Natural killer cell (primary cell): ENCODE measurements at regions of chr1 and their contacts with region 1.

Region 1: GRCh38 chr1:10472220-10473144 is at the start of gene DFFA:
- DNase-seq: peak; percentile 85 to 95
- ATAC-seq: peak; percentile 78 to 91 (median 90)
- H3K4me3 ChIP-seq: peak within 1 kb of the TSS; percentile 82
- H3K4me3 Mint-ChIP-seq: peak within 1 kb of the TSS; percentile 96
- H3K27ac ChIP-seq: peak within 1 kb of the TSS; percentile 36
- H3K27ac Mint-ChIP-seq: peak within 1 kb of the TSS; percentile 86 to 93
- H3K4me1 ChIP-seq: peaks cover 36% of the 10 kb centered on the region
- H3K4me1 Mint-ChIP-seq: peaks cover 41 to 54% of the 10 kb centered on the region in 2 donors
- H3K27me3 ChIP-seq: no peaks in the 10 kb centered on the region
- H3K27me3 Mint-ChIP-seq: no peaks in the 10 kb centered on the region
- CTCF ChIP-seq: no peak
- total RNA-seq, gene DFFA: 17.5 to 21.8 (median 21.5) TPM

Region 2: DNA sequence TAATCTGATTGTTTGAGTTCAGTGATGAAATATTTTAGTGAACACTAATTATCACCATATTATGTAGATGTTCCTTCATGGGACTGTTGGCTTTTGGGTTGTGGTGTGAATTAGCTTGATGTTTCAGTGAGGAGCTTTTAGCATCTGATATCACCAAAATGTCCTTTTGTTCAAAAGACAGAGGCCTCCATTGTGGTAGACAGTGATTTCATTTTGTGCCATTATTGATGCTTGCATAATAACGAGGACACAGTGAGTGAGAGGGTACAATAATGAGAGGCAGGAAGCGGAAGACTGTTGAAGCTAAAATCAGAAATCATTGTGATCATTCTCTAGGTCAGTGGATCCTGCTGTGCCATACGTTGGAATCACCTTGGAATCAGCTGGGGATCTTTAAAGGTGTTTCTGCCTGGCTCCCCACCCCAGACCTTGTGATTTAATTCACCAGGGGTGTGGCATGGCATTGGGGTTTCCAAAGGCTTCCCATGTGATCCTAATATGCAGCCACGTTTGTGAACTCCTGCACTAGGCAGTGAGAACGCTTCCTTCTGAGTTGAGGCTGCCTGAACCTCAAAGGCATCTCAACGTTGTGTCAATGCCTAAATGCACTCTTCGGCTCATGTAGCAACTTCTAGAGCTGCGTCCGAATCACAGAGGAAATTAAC is 344.2 kb before region 1 on chr1:
- intact Hi-C with region 1: no loop called
- DNase-seq: no peak
- ATAC-seq: no peak
- H3K4me3 ChIP-seq: no peak overlapping the region
- H3K4me3 Mint-ChIP-seq: no peak overlapping the region
- H3K27ac ChIP-seq: no peak overlapping the region
- H3K27ac Mint-ChIP-seq: no peak overlapping the region
- H3K4me1 ChIP-seq: no peaks in the 10 kb centered on the region
- H3K4me1 Mint-ChIP-seq: no peaks in the 10 kb centered on the region
- H3K27me3 ChIP-seq: no peaks in the 10 kb centered on the region
- H3K27me3 Mint-ChIP-seq: no peaks in the 10 kb centered on the region
- CTCF ChIP-seq: no peak

Region 3: GRCh38 chr1:10398734-10399623 is 73.5 kb before region 1 on chr1 and contains the start of gene PGD:
- intact Hi-C with region 1: loop called (anchors 2 kb)
- DNase-seq: peak; percentile 96 to 97
- ATAC-seq: peak; percentile 95 to 99 (median 95)
- H3K4me3 ChIP-seq: peak within 1 kb of the TSS; percentile 80
- H3K4me3 Mint-ChIP-seq: peak within 1 kb of the TSS; percentile 94
- H3K27ac ChIP-seq: peak within 1 kb of the TSS; percentile 81
- H3K27ac Mint-ChIP-seq: peak within 1 kb of the TSS; percentile 83 to 87
- H3K4me1 ChIP-seq: peaks cover 18% of the 10 kb centered on the region
- H3K4me1 Mint-ChIP-seq: peaks cover 15 to 19% of the 10 kb centered on the region in 2 donors
- H3K27me3 ChIP-seq: no peaks in the 10 kb centered on the region
- H3K27me3 Mint-ChIP-seq: no peaks in the 10 kb centered on the region
- CTCF ChIP-seq: no peak
- total RNA-seq, gene PGD: 35.8 to 113 (median 39.8) TPM

Region 4: DNA sequence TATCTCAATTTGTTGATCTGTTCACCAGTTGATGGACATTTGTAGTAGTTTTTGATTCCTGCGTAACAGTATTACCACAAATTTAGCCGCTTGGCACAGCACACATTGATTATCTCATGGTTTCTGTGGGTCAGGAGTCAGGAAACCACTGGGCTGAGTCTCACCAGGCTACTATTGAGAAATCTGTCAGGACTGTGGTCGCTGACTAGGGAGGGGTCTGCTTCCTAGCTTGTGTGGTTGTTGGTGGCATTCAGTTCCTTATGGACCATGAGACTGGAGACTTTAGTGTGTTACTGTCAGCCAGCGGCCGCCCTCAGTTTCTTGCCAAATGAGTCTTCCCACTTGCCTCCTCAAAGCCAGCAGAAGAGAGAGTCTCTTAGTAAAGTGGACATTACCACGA is 12.0 kb after region 1 on chr1:
- intact Hi-C with region 1: no loop called
- DNase-seq: no peak
- ATAC-seq: peak in 1 of 3 donors; percentile 52
- H3K4me3 ChIP-seq: no peak overlapping the region
- H3K4me3 Mint-ChIP-seq: no peak overlapping the region
- H3K27ac ChIP-seq: no peak overlapping the region
- H3K27ac Mint-ChIP-seq: no peak overlapping the region
- H3K4me1 ChIP-seq: peaks cover 4% of the 10 kb centered on the region
- H3K4me1 Mint-ChIP-seq: peaks cover 0 to 13% of the 10 kb centered on the region in 2 donors
- H3K27me3 ChIP-seq: no peaks in the 10 kb centered on the region
- H3K27me3 Mint-ChIP-seq: no peaks in the 10 kb centered on the region
- CTCF ChIP-seq: no peak